Mammary epithelial cell (primary cell): ENCODE measurements at regions of chr1 and their contacts with region 1.

Region 1: GRCh38 chr1:145751491-145752037 is 32.3 kb downstream of the CD160 start:
- DNase-seq: peak; percentile 81
- H3K4me3 ChIP-seq: no peak overlapping the region
- H3K27ac ChIP-seq: peak overlapping the region; percentile 9
- H3K4me1 ChIP-seq: peaks cover 13% of the 10 kb centered on the region
- H3K27me3 ChIP-seq: no peaks in the 10 kb centered on the region
- CTCF ChIP-seq: no peak

Region 2: DNA sequence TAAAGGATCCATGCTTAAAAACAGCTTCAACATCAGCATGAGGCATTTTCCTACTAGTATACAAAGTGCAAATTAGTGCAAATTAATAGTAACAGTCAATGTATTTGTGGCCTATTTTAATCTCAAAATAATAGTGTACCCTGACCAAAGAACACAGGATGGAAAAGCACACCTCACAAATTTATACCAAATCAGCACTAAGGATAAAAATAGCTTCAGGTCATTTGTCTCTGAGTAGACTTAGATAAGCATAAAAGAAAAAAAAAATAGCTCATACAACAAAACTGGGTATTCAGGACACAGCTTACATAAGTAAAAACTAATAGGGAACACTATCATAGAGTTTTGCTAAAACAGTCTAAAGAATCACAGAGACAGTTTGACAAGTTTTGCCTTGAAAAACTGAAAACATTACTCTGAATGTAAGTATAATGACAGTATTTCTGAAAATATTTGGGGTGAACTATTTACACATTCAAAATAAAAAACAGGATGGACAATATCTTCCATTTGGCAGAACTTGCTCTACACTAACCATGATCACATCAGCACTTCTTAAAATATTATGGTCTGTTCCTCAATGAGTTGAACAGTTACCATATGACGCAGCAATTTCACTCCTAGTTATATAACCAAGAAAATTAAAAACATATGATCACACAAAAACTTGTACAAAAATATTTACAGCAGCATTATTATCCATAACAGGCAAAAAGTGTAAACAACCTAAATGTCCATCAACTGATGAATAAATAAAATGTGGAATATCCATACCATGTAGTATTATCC is 26.0 kb after region 1 on chr1:
- CTCF ChIA-PET with region 1: no interaction called
- dilution Hi-C with region 1: no loop called
- in situ Hi-C with region 1: no loop called
- intact Hi-C with region 1: no loop called
- DNase-seq: no peak
- H3K4me3 ChIP-seq: no peak overlapping the region
- H3K27ac ChIP-seq: no peak overlapping the region
- H3K4me1 ChIP-seq: peaks cover 10% of the 10 kb centered on the region
- H3K27me3 ChIP-seq: no peaks in the 10 kb centered on the region
- CTCF ChIP-seq: no peak

Region 3: DNA sequence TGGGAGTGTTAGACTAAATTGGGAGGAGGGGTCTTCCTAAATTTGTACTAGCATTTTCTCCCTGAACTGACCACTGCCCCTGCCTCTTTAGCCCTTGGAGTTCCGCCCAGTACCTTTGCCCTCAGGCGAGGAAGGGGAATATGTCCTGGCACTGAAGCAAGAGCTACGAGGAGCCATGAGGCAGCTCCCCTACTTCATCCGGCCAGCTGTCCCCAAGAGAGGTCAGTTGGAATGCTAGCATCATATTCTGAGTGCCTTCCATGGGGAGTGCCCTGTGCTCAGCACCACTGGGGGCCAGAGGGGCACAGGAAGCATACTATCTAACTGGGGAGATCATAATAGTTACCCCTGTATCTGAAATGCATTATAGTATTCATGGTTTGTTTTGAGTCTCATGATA is 223.7 kb after region 1 on chr1:
- CTCF ChIA-PET with region 1: no interaction called
- dilution Hi-C with region 1: no loop called
- in situ Hi-C with region 1: no loop called
- intact Hi-C with region 1: no loop called
- DNase-seq: no peak
- H3K4me3 ChIP-seq: no peak overlapping the region
- H3K27ac ChIP-seq: no peak overlapping the region
- H3K4me1 ChIP-seq: peaks cover 32% of the 10 kb centered on the region
- H3K27me3 ChIP-seq: no peaks in the 10 kb centered on the region
- CTCF ChIP-seq: no peak

Region 4: GRCh38 chr1:145996433-145997015 is 245.0 kb after region 1 on chr1 and contains the start of gene TXNIP:
- CTCF ChIA-PET with region 1: interaction called, 12 read pairs
- dilution Hi-C with region 1: no loop called
- in situ Hi-C with region 1: no loop called
- intact Hi-C with region 1: no loop called
- DNase-seq: peak; percentile 93
- H3K4me3 ChIP-seq: peak within 1 kb of the TSS; percentile 58 to 84 (median 81)
- H3K27ac ChIP-seq: peak within 1 kb of the TSS; percentile 71
- H3K4me1 ChIP-seq: peaks cover 36% of the 10 kb centered on the region
- H3K27me3 ChIP-seq: no peaks in the 10 kb centered on the region
- CTCF ChIP-seq: no peak
- total RNA-seq, gene TXNIP: 92.8 to 355 TPM